Activated CD4-positive, alpha-beta T cell treated with anti-CD3 and anti-CD28 coated beads, Interleukin-2, amount 10 ng/mL, durations not matched to agents 7 days and 5 days (primary cell): ENCODE measurements at regions of chr2 and their contacts with region 1.

Region 1: DNA sequence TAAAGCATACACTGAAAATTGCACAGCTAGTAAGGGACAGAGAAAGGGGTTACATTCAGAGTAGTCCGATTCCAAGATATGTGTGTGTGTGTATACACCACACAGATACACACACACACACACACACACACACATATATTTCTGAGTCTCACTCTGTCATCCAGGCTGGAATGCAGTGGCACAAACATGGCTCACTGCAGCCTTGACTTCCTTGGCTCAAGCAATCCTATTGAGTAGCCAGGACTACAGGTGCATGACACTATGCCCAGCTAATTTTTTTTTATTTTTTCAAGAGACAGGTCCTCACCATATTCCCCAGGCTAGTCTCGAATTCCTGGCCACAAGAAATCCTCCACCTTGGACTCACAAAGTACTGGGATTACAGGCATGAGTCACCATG is 68.1 kb upstream of the ITPRID2 start:
- DNase-seq: no peak
- H3K4me3 Mint-ChIP-seq: no peak overlapping the region
- H3K27ac Mint-ChIP-seq: no peak overlapping the region
- H3K4me1 Mint-ChIP-seq: no peaks in the 10 kb centered on the region
- H3K27me3 Mint-ChIP-seq: peaks cover 8% of the 10 kb centered on the region

Region 2: DNA sequence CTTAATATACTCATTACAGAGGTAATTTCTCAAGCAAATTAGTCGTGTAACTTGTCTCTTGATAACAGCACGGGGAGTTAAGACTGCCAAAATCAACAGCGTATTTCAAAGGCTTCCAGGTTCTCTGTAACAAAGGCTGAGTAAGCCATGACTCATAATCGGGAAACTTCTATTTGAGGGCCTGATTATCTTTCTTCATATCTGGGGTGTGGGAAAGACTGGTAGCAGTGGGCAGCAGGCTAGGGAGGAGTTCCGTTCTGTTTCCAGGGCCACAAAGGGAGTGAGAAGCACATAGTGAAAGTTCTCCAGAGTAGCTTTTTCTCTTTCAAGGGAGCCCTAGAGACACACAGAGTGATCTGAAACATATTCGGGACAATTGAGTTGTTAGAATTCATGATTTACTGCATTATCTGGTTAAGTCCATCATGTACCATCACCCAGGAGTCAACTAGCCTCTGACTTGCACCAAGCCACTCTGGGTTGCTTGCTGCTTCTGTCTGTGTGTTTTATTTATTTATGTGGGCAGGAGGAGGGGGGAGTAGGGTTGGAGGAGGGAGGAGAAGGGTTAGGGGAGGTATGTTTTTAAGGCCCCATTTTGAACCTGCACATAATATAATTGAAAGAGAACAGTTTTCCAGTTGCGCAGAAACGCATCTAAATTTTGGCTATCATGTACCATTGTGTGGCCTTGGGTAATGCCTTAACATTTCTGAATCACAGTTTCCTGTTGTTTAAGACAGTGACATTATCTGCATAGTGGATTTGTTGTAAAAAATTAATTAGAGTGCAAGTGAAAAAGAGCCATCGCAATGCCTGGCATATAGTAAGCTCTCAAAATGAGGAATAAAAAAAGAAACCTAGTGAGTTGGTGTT is 12.3 kb before region 1 on chr2:
- CTCF ChIA-PET with region 1: interaction called, 10 read pairs
- POLR2A ChIA-PET with region 1: no interaction called
- DNase-seq: no peak
- H3K4me3 Mint-ChIP-seq: no peak overlapping the region
- H3K27ac Mint-ChIP-seq: no peak overlapping the region
- H3K4me1 Mint-ChIP-seq: peaks cover 12% of the 10 kb centered on the region
- H3K27me3 Mint-ChIP-seq: no peaks in the 10 kb centered on the region